ENCODE measurements at regions of chr10 and their contacts with region 1.

Region 1: GRCh38 chr10:69123747-69124562 is at the start of gene VPS26A:
- DNase-seq: peak; percentile 99
- H3K4me3 ChIP-seq: peak within 1 kb of the TSS; percentile 50 to 82 (median 81)
- H3K27ac ChIP-seq: peak within 1 kb of the TSS; percentile 79
- H3K4me1 ChIP-seq: peaks cover 16% of the 10 kb centered on the region
- H3K27me3 ChIP-seq: no peaks in the 10 kb centered on the region
- CTCF ChIP-seq: peak; percentile 35 to 47
- POLR2A ChIP-seq: peak; percentile 83
- total RNA-seq, gene VPS26A: 55.8 and 60.3 TPM in 2 replicates

Region 2: GRCh38 chr10:69004821-69005220 is 119.1 kb before region 1 on chr10:
- CTCF ChIA-PET with region 1: interaction called, 51 read pairs
- POLR2A ChIA-PET with region 1: no interaction called
- dilution Hi-C with region 1: no loop called
- intact Hi-C with region 1: loop called (anchors 1 kb)
- DNase-seq: peak; percentile 61
- H3K4me3 ChIP-seq: no peak overlapping the region
- H3K27ac ChIP-seq: no peak overlapping the region
- H3K4me1 ChIP-seq: no peaks in the 10 kb centered on the region
- H3K27me3 ChIP-seq: no peaks in the 10 kb centered on the region
- CTCF ChIP-seq: peak; percentile 38
- POLR2A ChIP-seq: no peak

Region 3: GRCh38 chr10:69092959-69093850 is 30.8 kb before region 1 on chr10:
- CTCF ChIA-PET with region 1: interaction called, 5 read pairs
- POLR2A ChIA-PET with region 1: no interaction called
- dilution Hi-C with region 1: no loop called
- intact Hi-C with region 1: loop called (anchors 1 kb)
- DNase-seq: peak; percentile 85
- H3K4me3 ChIP-seq: no peak overlapping the region
- H3K27ac ChIP-seq: no peak overlapping the region
- H3K4me1 ChIP-seq: peaks cover 33% of the 10 kb centered on the region
- H3K27me3 ChIP-seq: no peaks in the 10 kb centered on the region
- CTCF ChIP-seq: peak; percentile 54 to 55
- POLR2A ChIP-seq: no peak

Region 4: GRCh38 chr10:69179743-69180524 is 56.0 kb after region 1 on chr10 and contains the start of gene SUPV3L1:
- CTCF ChIA-PET with region 1: no interaction called
- POLR2A ChIA-PET with region 1: no interaction called
- dilution Hi-C with region 1: no loop called
- intact Hi-C with region 1: loop called (anchors 1 kb)
- DNase-seq: peak; percentile 97
- H3K4me3 ChIP-seq: peak within 1 kb of the TSS; percentile 61 to 96 (median 64)
- H3K27ac ChIP-seq: peak within 1 kb of the TSS; percentile 94
- H3K4me1 ChIP-seq: peaks cover 17% of the 10 kb centered on the region
- H3K27me3 ChIP-seq: no peaks in the 10 kb centered on the region
- CTCF ChIP-seq: no peak
- POLR2A ChIP-seq: peak; percentile 76
- total RNA-seq, gene SUPV3L1: 30.0 and 30.4 TPM in 2 replicates